OCI-LY7 (cell line): ENCODE measurements at regions of chr22 and their contacts with region 1.

Region 1: DNA sequence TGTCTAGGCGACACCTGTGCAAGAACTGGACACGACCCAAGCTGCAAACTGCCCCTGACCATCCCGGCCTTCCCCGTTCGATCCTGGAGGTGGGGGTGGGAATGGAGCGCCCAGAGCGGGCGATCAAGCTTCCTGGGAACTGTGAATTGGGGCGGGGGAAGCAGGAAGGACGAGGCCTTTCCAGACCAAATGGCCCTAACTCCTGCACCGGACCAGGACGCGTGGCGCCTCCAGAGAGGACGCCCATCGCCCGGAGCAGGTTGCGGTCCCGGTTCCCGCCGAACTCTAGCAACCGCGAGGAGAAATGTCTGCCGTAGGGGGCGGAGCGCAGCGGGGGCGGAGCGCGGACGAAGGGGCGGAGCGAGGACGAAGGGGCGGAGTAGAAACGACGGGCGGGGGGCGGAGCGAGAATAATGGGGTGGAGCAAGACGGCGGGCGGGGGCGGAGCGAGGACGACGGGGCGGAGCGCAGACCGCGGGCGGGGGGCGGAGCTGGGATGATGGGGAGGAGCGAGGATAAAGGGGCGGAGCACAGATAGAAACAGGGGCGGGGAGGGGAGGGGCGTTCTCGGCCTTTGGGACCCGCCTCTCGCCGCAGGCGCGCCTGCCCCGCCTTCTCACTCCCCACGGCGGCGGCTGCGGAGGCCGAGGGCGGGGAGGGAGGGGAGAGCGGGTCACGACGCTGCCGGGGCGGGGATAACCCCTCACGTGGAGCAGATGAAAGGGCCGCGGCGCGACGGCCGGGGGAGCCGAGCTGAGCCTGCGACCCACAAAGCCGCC is at the start of gene ZNRF3:
- DNase-seq: peak; percentile 90
- H3K4me3 ChIP-seq: peak within 1 kb of the TSS; percentile 69
- H3K27ac ChIP-seq: no peak within 1 kb of the TSS
- H3K4me1 ChIP-seq: peaks cover 15% of the 10 kb centered on the region
- CTCF ChIP-seq: no peak
- total RNA-seq, gene ZNRF3: 1.2 and 3.6 TPM in 2 replicates

Region 2: DNA sequence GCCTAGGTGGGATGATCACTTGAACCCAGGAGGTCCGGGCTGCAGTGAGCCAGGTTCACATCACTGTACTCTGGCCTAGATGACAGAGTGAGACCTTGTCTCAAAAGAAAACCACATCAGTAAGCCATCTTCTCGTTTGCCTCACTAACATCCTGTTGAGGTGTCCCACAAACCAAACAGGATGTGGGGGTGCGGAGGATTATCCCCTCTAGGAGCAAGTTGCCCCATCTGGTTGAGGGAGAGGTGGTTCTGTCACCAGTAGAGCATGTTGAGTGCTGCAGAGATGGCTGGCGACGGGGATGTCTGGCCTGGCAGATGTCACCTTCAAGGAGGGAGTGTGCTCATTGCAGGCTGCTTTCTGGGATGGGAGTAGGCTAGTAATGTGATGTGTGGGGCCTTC is 72.8 kb after region 1 on chr22:
- CTCF ChIA-PET with region 1: no interaction called
- POLR2A ChIA-PET with region 1: no interaction called
- intact Hi-C with region 1: loop called (anchors 5 kb)
- DNase-seq: peak; percentile 65
- H3K4me3 ChIP-seq: no peak overlapping the region
- H3K27ac ChIP-seq: no peak overlapping the region
- H3K4me1 ChIP-seq: peaks cover 21% of the 10 kb centered on the region
- CTCF ChIP-seq: no peak

Region 3: GRCh38 chr22:29022101-29022817 is 139.2 kb after region 1 on chr22:
- CTCF ChIA-PET with region 1: no interaction called
- POLR2A ChIA-PET with region 1: no interaction called
- intact Hi-C with region 1: no loop called
- DNase-seq: no peak
- H3K4me3 ChIP-seq: no peak overlapping the region
- H3K27ac ChIP-seq: no peak overlapping the region
- H3K4me1 ChIP-seq: no peaks in the 10 kb centered on the region
- CTCF ChIP-seq: no peak

Region 4: GRCh38 chr22:29117799-29118477 is 234.9 kb after region 1 on chr22:
- CTCF ChIA-PET with region 1: no interaction called
- POLR2A ChIA-PET with region 1: no interaction called
- intact Hi-C with region 1: no loop called
- DNase-seq: no peak
- H3K4me3 ChIP-seq: no peak overlapping the region
- H3K27ac ChIP-seq: no peak overlapping the region
- H3K4me1 ChIP-seq: no peaks in the 10 kb centered on the region
- CTCF ChIP-seq: no peak